Mucosa of descending colon (tissue), 3 donors: ENCODE measurements at regions of chr5 and their contacts with region 1.

Region 1: DNA sequence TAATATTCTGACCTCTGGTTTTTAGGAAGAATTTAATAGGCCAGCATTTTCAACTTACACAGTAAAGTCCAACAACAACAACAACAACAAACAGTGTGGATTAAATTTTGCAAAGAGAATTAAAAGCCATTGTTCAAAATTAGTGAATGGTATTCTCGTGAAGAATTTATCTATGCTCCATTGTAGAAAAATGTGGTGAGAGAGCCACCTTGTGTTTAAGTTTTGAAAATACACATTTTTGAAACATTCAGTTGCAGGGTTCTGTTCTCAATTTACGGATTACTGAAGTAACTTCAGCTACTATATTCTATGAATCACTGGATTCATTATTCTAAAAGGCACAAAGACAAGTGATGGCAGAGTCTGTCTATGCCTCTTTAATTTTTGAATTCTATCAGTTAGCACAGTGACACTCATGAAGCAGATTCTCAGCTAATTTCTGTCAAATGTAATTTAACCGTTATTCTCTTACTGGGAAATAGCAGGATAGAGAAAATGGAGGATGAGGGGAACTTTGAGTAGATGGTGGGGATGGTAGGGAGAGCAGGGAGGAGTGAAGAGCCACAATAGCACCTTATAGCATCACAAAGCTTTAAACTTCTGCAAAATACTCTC is 11.0 kb downstream of the CCDC152 start:
- DNase-seq: no peak
- ATAC-seq: peak; percentile 39
- H3K4me3 ChIP-seq: no peak overlapping the region
- H3K4me1 ChIP-seq: no peaks in the 10 kb centered on the region
- CTCF ChIP-seq: no peak

Region 2: GRCh38 chr5:41856644-41857491 is 910.7 kb before region 1 on chr5:
- intact Hi-C with region 1: loop called in 1 of 2 experiments (anchors 10 kb)
- DNase-seq: peak in 1 of 3 donors; percentile 79
- ATAC-seq: peak; percentile 92
- H3K4me3 ChIP-seq: no peak overlapping the region
- H3K4me1 ChIP-seq: peaks cover 3% of the 10 kb centered on the region
- CTCF ChIP-seq: peak; percentile 62

Region 3: DNA sequence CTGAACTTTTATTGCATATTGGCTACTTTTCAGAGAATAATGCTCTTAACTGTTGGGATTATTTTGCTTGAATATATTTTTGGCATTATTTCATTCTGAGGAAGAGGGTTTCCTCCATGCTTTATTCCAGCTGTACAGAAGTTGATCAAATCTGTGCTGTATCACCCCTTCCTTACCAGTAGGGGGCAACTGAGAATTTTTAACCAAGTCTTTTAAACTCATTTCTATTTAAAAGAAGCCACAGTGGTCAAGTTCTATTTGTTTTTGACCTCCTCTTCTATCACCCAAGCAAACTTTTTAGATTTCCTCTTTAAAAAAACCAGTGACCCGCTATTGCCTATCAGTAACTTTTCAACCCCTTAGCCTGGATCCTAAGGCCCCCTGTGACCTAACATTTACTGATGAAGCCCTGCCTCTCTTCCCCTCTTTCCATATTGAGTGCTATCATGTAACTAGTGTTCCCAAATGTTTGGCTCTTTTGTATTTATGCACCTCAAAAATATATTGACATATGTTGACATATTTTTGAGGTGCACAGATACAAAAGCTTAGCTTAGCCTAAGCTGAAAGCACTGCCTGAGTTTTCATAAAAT is 761.9 kb before region 1 on chr5:
- intact Hi-C with region 1: loop called in 1 of 2 experiments (anchors 5 kb)
- DNase-seq: no peak
- ATAC-seq: peak; percentile 25
- H3K4me3 ChIP-seq: no peak overlapping the region
- H3K4me1 ChIP-seq: no peaks in the 10 kb centered on the region
- CTCF ChIP-seq: peak; percentile 38

Region 4: GRCh38 chr5:42889311-42889933 is 121.8 kb after region 1 on chr5:
- intact Hi-C with region 1: loop called in 1 of 2 experiments (anchors 5 kb)
- DNase-seq: peak in 2 of 3 donors; percentile 78 to 92
- ATAC-seq: peak; percentile 79
- H3K4me3 ChIP-seq: no peak overlapping the region
- H3K4me1 ChIP-seq: peaks cover 16% of the 10 kb centered on the region
- CTCF ChIP-seq: peak; percentile 70